ENCODE measurements at regions of chr2 and their contacts with region 1.

Region 1: DNA sequence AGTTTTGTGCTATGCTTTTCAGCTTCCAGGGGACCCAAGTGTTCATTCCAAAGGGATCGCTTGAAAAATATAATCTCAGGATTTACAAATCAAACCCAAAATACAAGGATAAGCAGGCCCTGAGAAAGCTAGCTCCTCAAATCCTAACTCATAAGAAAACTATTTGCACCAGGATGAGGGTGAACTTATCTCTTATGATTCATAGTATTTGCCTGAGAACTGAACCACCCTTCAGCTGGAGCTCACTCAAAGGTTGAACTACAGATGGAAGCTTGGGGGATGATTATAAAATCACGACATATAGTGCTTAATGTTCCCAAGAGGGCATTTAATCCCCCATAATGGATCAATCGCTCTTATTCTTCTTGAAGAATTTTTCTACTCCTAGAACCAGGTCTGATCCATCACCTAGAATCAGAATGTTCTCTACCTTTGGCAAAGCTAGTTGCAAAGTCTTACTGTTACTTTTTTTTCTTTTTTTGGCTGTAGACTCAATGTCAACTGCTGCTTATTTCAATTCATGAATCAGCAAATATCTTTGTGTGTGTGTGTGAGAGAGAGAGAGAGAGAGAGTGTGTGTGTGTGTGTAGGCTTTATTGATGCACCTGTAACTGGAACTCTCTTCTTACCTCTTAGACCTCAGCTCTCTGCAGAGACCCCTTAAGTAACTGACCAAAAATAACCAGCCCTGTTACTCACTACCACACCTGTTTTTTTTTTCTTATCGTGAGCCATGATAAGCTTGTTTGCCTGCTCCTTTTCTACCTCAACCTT is 44.8 kb downstream of the ARL4C start:
- DNase-seq: peak in 7 of 9 donors; percentile 30 to 74 (median 62)
- ATAC-seq: peak; percentile 41
- H3K4me3 ChIP-seq: peak overlapping the region; percentile 71
- H3K4me3 Mint-ChIP-seq: peak overlapping the region; percentile 83 to 99 (median 91)
- H3K27ac ChIP-seq: peak overlapping the region; percentile 96
- H3K27ac Mint-ChIP-seq: peak overlapping the region; percentile 90 to 100 (median 96)
- H3K4me1 ChIP-seq: peaks cover 66 to 70% of the 10 kb centered on the region in 2 donors
- H3K4me1 Mint-ChIP-seq: peaks cover 32 to 88% (median 84%) of the 10 kb centered on the region in 7 donors
- H3K27me3 ChIP-seq: no peaks in the 10 kb centered on the region
- H3K27me3 Mint-ChIP-seq: no peaks in the 10 kb centered on the region

Region 2: DNA sequence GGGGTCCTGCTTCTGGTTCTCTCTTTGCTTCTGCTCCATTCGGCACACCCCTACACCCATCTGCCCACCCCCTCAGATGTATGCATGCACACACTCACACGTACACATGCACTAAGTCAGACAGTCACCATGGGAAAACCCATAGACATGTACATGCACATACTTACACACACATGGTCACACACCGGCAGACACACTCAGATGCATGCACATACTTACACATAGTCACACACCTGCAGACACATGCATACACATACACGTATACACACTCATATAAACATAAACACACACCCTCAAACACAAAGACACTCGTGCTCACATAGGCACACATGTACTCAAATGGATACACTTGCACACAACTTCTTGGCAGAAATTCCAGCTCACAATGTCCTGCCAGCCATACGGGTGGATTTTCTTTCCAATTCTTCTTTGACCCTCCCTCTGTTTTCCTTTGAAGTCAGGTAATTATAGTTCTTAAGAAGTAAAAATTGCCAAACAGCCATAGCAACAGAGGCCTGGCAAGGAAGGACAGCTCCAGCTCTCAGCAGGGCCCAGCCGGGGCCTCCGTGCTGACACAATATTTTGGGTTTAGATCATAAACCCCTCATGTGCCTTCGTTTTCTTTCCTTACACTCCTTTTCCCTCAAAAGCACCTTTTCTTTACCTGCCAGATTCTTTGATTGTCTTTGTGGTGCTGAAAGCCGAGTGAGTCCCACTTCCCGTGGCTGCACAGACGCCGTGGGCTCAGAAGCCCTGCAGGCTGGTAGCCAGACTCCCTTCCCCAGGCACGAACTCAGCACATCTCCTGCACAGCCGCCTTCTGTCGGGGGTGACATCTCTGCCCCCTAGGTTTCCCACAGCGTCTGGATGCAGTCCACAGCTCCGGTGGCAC is 150.9 kb before region 1 on chr2:
- CTCF ChIA-PET with region 1: no interaction called
- POLR2A ChIA-PET with region 1: interaction called, 11 read pairs
- intact Hi-C with region 1: no loop called
- DNase-seq: peak in 3 of 9 donors; percentile 15 to 34 (median 21)
- ATAC-seq: no peak
- H3K4me3 ChIP-seq: peak overlapping the region; percentile 12
- H3K4me3 Mint-ChIP-seq: peak overlapping the region; percentile 16 to 81 (median 66)
- H3K27ac ChIP-seq: no peak overlapping the region
- H3K27ac Mint-ChIP-seq: peak overlapping the region; percentile 64 to 95 (median 83)
- H3K4me1 ChIP-seq: peaks cover 11 to 57% of the 10 kb centered on the region in 2 donors
- H3K4me1 Mint-ChIP-seq: peaks cover 34 to 79% (median 68%) of the 10 kb centered on the region in 7 donors
- H3K27me3 ChIP-seq: no peaks in the 10 kb centered on the region
- H3K27me3 Mint-ChIP-seq: no peaks in the 10 kb centered on the region

Region 3: DNA sequence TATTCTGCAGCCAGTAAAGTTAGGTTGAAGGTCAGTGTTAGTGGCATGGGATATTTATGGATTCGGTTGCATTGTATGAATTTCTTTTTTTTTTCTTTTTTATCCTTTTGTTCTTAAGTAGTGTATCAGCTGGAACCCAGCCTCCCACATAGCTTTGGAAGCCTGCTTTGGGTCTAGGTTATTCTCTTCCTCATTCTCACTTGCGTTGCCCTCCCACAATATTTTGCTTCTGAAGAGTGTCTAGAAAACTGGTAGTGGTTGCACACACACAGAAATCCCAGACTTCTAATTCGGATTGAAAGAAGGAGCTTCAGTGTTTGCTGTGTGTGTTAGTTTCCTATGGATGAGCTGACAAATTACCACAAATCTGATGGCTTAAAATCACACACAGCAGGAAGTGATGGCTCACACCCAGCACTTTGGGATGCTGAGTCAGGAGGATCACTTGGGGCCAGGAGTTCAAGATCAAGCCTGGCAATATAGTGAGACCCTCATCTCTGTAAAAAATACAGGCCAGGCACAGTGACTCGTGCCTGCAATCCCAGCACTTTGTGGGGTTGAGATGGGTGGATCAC is 59.9 kb before region 1 on chr2:
- CTCF ChIA-PET with region 1: interaction called, 6 read pairs
- POLR2A ChIA-PET with region 1: interaction called, 5 read pairs
- intact Hi-C with region 1: loop called in 1 of 2 experiments (anchors 1 kb)
- DNase-seq: no peak
- ATAC-seq: no peak
- H3K4me3 ChIP-seq: no peak overlapping the region
- H3K4me3 Mint-ChIP-seq: peak overlapping the region in 9 of 10 donors; percentile 35 to 84 (median 46)
- H3K27ac ChIP-seq: peak overlapping the region; percentile 53
- H3K27ac Mint-ChIP-seq: peak overlapping the region; percentile 17 to 98 (median 94)
- H3K4me1 ChIP-seq: peaks cover 21 to 53% of the 10 kb centered on the region in 2 donors
- H3K4me1 Mint-ChIP-seq: peaks cover 34 to 73% (median 65%) of the 10 kb centered on the region in 7 donors
- H3K27me3 ChIP-seq: no peaks in the 10 kb centered on the region
- H3K27me3 Mint-ChIP-seq: no peaks in the 10 kb centered on the region

Region 4: GRCh38 chr2:234463626-234464290 is 11.7 kb after region 1 on chr2:
- CTCF ChIA-PET with region 1: interaction called, 16 read pairs
- POLR2A ChIA-PET with region 1: interaction called, 343 read pairs
- intact Hi-C with region 1: loop called (anchors 1 kb)
- DNase-seq: peak; percentile 36 to 91 (median 87)
- ATAC-seq: peak; percentile 93
- H3K4me3 ChIP-seq: peak overlapping the region; percentile 26
- H3K4me3 Mint-ChIP-seq: peak overlapping the region; percentile 45 to 84 (median 76)
- H3K27ac ChIP-seq: peak overlapping the region; percentile 93
- H3K27ac Mint-ChIP-seq: peak overlapping the region; percentile 94 to 100 (median 96)
- H3K4me1 ChIP-seq: peaks cover 60 to 63% of the 10 kb centered on the region in 2 donors
- H3K4me1 Mint-ChIP-seq: peaks cover 49 to 97% (median 79%) of the 10 kb centered on the region in 7 donors
- H3K27me3 ChIP-seq: no peaks in the 10 kb centered on the region
- H3K27me3 Mint-ChIP-seq: no peaks in the 10 kb centered on the region

Region 5: GRCh38 chr2:234488913-234489451 is 36.9 kb after region 1 on chr2:
- CTCF ChIA-PET with region 1: interaction called, 19 read pairs
- POLR2A ChIA-PET with region 1: interaction called, 338 read pairs
- intact Hi-C with region 1: loop called (anchors 1 kb)
- DNase-seq: peak in 8 of 9 donors; percentile 64 to 89 (median 82)
- ATAC-seq: peak; percentile 80
- H3K4me3 ChIP-seq: peak overlapping the region; percentile 48
- H3K4me3 Mint-ChIP-seq: peak overlapping the region; percentile 85 to 100 (median 96)
- H3K27ac ChIP-seq: peak overlapping the region; percentile 94
- H3K27ac Mint-ChIP-seq: peak overlapping the region; percentile 91 to 100 (median 98)
- H3K4me1 ChIP-seq: peaks cover 68 to 83% of the 10 kb centered on the region in 2 donors
- H3K4me1 Mint-ChIP-seq: peaks cover 39 to 84% (median 79%) of the 10 kb centered on the region in 7 donors
- H3K27me3 ChIP-seq: no peaks in the 10 kb centered on the region
- H3K27me3 Mint-ChIP-seq: peaks cover 0 to 2% (median 0%) of the 10 kb centered on the region in 5 donors

Region 6: DNA sequence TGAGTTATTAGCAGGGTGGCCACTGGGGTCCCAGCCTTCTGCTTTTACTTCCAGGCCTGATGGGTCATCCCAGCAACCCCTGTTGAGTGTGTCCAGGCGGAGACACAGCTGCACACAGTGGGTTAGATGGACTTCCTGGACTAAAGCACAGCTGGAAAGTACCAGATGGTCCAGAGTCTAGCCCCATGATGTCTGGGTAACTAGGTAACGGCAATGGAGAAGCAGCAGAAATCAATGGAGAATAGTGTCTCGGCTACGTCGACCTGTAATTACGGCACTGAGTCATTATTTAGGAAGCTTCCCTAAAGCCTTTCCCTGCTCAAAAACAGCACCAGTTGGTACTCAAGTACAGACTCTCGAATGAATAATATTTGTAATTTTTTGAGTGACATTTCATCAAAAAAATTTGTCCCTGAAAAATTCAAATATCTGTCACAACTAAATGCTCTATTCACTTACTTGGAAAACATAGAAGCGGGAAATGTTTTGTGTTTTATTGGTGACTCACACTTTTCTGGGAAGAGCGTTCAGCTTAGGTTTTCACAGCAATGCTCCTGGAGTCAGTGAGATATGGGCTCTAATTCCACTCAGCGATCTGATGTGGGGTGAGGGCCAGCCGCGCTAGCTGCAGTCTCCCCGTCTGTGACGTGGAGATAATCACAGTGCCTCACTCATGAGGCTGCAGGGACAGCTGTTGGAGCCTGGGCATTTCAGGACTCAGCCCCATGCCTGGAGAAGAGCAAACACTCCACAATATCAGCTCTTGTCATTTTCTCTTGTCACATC is 61.0 kb after region 1 on chr2:
- CTCF ChIA-PET with region 1: no interaction called
- POLR2A ChIA-PET with region 1: no interaction called
- intact Hi-C with region 1: no loop called
- DNase-seq: no peak
- ATAC-seq: no peak
- H3K4me3 ChIP-seq: no peak overlapping the region
- H3K4me3 Mint-ChIP-seq: no peak overlapping the region
- H3K27ac ChIP-seq: no peak overlapping the region
- H3K27ac Mint-ChIP-seq: no peak overlapping the region
- H3K4me1 ChIP-seq: no peaks in the 10 kb centered on the region
- H3K4me1 Mint-ChIP-seq: no peaks in the 10 kb centered on the region
- H3K27me3 ChIP-seq: no peaks in the 10 kb centered on the region
- H3K27me3 Mint-ChIP-seq: peaks cover 0 to 23% (median 0%) of the 10 kb centered on the region in 5 donors

Measured in naive thymus-derived CD4-positive, alpha-beta T cell (primary cell).